OCI-LY7 (cell line): ENCODE measurements at regions of chr2 and their contacts with region 1.

Region 1: DNA sequence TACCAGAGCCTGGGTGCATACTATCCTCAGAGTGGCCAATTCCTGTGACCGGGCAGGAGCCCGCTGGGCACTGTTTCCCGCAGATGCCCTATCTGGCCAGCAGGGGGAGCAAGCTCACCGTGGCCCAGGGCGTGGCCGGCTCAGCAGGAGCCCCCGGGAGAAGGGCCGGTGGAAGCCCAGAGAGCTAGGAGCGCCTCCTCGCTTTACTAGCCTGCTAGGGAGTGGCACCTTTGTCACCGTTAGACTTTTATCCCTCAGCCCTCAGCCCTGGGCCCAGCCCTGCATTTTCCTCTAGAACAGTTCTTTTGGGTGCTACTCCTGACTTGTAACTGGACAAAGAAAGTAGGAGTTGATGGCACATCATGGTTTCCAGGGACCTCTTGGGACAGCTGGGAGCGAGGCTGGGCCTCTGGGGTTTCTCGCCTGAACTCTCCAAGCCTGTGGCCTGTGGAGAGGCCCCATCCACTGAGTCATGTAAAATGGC is 24.0 kb downstream of the TMEM177 start:
- DNase-seq: peak; percentile 75
- H3K4me3 ChIP-seq: no peak overlapping the region
- H3K27ac ChIP-seq: no peak overlapping the region
- H3K4me1 ChIP-seq: peaks cover 14% of the 10 kb centered on the region
- CTCF ChIP-seq: peak; percentile 97

Region 2: GRCh38 chr2:119759451-119760236 is 56.7 kb after region 1 on chr2 and contains the start of gene PTPN4:
- CTCF ChIA-PET with region 1: no interaction called
- POLR2A ChIA-PET with region 1: no interaction called
- intact Hi-C with region 1: loop called (anchors 2 kb)
- DNase-seq: peak; percentile 99
- H3K4me3 ChIP-seq: peak within 1 kb of the TSS; percentile 95
- H3K27ac ChIP-seq: peak within 1 kb of the TSS; percentile 84
- H3K4me1 ChIP-seq: peaks cover 19% of the 10 kb centered on the region
- CTCF ChIP-seq: no peak
- total RNA-seq, gene PTPN4: 29.8 and 50.6 TPM in 2 replicates

Region 3: GRCh38 chr2:119826370-119826961 is 123.5 kb after region 1 on chr2:
- CTCF ChIA-PET with region 1: interaction called, 3 read pairs
- POLR2A ChIA-PET with region 1: no interaction called
- intact Hi-C with region 1: loop called (anchors 1 kb)
- DNase-seq: peak; percentile 51
- H3K4me3 ChIP-seq: no peak overlapping the region
- H3K27ac ChIP-seq: no peak overlapping the region
- H3K4me1 ChIP-seq: no peaks in the 10 kb centered on the region
- CTCF ChIP-seq: peak; percentile 85

Region 4: GRCh38 chr2:120898961-120899750 is 1196.2 kb after region 1 on chr2:
- CTCF ChIA-PET with region 1: no interaction called
- POLR2A ChIA-PET with region 1: no interaction called
- intact Hi-C with region 1: no loop called
- DNase-seq: no peak
- H3K4me3 ChIP-seq: no peak overlapping the region
- H3K27ac ChIP-seq: no peak overlapping the region
- H3K4me1 ChIP-seq: no peaks in the 10 kb centered on the region
- CTCF ChIP-seq: no peak